Heart left ventricle (tissue), 16 donors: ENCODE measurements at regions of chr18 and their contacts with region 1.

Region 1: GRCh38 chr18:7666195-7666776 is 99.2 kb downstream of the PTPRM start:
- DNase-seq: no peak
- ATAC-seq: no peak
- H3K4me3 ChIP-seq: no peak overlapping the region
- H3K27ac ChIP-seq: no peak overlapping the region
- H3K4me1 ChIP-seq: peaks cover 0 to 56% (median 15%) of the 10 kb centered on the region in 12 donors
- H3K27me3 ChIP-seq: no peaks in the 10 kb centered on the region
- CTCF ChIP-seq: peak in 2 of 12 donors; percentile 7 to 12
- POLR2A ChIP-seq: no peak

Region 2: GRCh38 chr18:7438646-7439045 is 227.6 kb before region 1 on chr18:
- intact Hi-C with region 1: no loop called
- DNase-seq: no peak
- ATAC-seq: no peak
- H3K4me3 ChIP-seq: no peak overlapping the region
- H3K27ac ChIP-seq: no peak overlapping the region
- H3K4me1 ChIP-seq: no peaks in the 10 kb centered on the region
- H3K27me3 ChIP-seq: no peaks in the 10 kb centered on the region
- CTCF ChIP-seq: no peak
- POLR2A ChIP-seq: no peak

Region 3: DNA sequence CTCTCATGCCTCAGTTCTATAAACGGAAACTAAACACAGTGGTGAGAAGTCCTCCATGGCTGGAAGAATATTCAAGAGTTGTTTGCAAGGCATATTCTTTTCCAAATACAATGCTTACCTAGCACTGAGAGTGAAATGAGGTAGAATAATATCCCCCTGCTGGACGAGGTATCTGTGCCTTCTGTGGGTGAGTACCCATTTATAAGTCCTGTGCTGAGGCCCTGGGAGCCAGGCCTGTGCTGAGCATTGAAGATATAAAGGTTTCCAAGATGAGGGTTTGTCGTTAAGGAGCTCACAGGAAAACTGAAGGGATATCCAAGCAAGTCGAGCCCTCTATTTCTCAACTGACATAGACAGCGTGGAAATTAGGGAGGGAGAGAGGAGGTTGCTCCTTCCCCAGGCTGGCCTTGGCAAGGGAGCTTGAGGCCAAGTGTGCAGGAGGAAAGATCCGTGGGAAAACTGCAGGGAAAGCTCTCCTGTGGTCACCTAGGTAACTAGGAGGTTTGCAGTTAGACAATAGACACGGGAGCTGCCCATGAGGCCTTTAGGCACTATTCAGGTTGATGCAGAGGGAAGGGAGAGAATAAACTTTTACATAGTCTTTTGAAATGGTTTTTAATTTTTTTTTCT is 81.5 kb before region 1 on chr18:
- intact Hi-C with region 1: loop called in 1 of 10 experiments (anchors 10 kb)
- DNase-seq: no peak
- ATAC-seq: peak in 3 of 4 donors; percentile 39 to 52 (median 42)
- H3K4me3 ChIP-seq: no peak overlapping the region
- H3K27ac ChIP-seq: peak overlapping the region in 6 of 12 donors; percentile 0 to 52 (median 21)
- H3K4me1 ChIP-seq: peaks cover 6 to 89% (median 46%) of the 10 kb centered on the region in 12 donors
- H3K27me3 ChIP-seq: no peaks in the 10 kb centered on the region
- CTCF ChIP-seq: no peak
- POLR2A ChIP-seq: no peak

Region 4: GRCh38 chr18:7617738-7618422 is 48.4 kb before region 1 on chr18:
- intact Hi-C with region 1: loop called in 1 of 10 experiments (anchors 5 kb)
- DNase-seq: peak in 4 of 5 donors; percentile 50 to 65 (median 62)
- ATAC-seq: peak in 3 of 4 donors; percentile 10 to 60 (median 49)
- H3K4me3 ChIP-seq: peak overlapping the region in 8 of 12 donors; percentile 4 to 33 (median 14)
- H3K27ac ChIP-seq: peak overlapping the region in 11 of 12 donors; percentile 9 to 73 (median 62)
- H3K4me1 ChIP-seq: peaks cover 13 to 97% (median 64%) of the 10 kb centered on the region in 12 donors
- H3K27me3 ChIP-seq: no peaks in the 10 kb centered on the region
- CTCF ChIP-seq: no peak
- POLR2A ChIP-seq: no peak

Region 5: DNA sequence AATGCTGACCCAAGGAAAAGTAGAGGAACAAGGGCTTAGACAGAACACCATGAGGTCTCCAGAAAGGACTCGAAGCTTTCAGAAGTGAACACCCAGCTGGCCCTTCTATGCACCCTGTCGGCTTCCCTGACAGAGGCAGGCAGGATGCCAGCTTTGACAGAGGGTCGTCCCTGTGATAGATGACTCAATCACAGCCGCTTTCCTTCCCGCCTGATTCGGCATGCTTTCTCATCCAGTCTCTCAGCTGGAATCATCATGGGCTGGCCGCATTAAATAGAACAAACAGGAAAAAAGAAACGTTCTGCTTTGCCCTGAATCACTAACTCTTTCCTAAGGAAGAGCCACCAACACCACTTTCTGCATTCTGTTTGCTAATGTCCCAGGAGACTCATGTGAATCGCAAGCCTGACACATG is 802.6 kb after region 1 on chr18:
- intact Hi-C with region 1: loop called in 1 of 10 experiments (anchors 5 kb)
- DNase-seq: peak in 2 of 5 donors; percentile 47 to 60
- ATAC-seq: peak in 3 of 4 donors; percentile 17 to 64 (median 60)
- H3K4me3 ChIP-seq: peak overlapping the region in 1 of 12 donors; percentile 2
- H3K27ac ChIP-seq: peak overlapping the region in 2 of 12 donors; percentile 13 to 28
- H3K4me1 ChIP-seq: peaks cover 0 to 19% (median 15%) of the 10 kb centered on the region in 12 donors
- H3K27me3 ChIP-seq: no peaks in the 10 kb centered on the region
- CTCF ChIP-seq: no peak
- POLR2A ChIP-seq: no peak